Activated CD8-positive, alpha-beta memory T cell treated with anti-CD3 and anti-CD28 coated beads, Interleukin-2, amount 10 ng/mL, durations not matched to agents 7 days and 5 days (primary cell): ENCODE measurements at regions of chr13 and their contacts with region 1.

Region 1: GRCh38 chr13:30114571-30115256 is 192.6 kb downstream of the KATNAL1 start:
- DNase-seq: peak; percentile 95
- ATAC-seq: peak; percentile 97
- H3K4me3 Mint-ChIP-seq: peak overlapping the region; percentile 71
- H3K27ac Mint-ChIP-seq: peak overlapping the region; percentile 24
- H3K4me1 Mint-ChIP-seq: peaks cover 33% of the 10 kb centered on the region
- H3K27me3 Mint-ChIP-seq: peaks cover 6% of the 10 kb centered on the region

Region 2: DNA sequence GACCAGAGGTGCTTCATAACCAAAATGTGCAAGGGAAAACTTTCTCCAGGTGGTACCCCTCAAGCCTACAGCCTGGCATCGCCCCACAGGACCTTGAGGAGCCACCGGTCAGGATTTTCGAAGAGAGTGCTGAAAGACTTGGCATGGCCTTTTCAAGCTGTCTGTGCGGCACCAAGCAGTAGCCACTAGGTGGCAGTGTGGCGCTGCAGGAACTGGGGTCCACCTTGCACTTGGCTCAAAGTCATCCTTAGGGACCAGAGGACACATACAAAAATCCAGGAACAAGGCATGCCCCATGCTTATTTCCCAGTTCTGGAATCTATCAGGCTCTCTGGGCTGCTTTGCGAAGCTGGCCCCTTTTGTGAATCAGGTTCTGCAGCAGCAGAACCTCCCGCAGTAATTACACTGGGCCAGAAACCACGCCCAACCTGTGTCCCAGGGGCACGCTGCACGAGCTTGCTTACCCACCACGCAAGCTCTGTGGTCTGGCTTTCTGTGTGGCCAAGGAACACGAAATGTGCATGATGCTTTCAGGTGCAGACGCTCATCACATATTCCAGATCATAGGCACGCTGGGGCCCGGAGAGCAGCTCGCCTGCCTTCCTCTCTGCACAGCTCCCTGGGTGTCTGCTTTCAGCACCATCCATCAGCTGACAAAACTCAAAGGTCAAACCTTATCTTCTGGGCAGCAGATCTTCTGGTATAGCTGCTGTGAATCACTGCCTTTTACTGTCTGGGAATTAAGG is 606.4 kb before region 1 on chr13:
- CTCF ChIA-PET with region 1: interaction called, 54 read pairs
- DNase-seq: peak; percentile 82
- ATAC-seq: peak; percentile 86
- H3K4me3 Mint-ChIP-seq: no peak overlapping the region
- H3K27ac Mint-ChIP-seq: no peak overlapping the region
- H3K4me1 Mint-ChIP-seq: peaks cover 15% of the 10 kb centered on the region
- H3K27me3 Mint-ChIP-seq: peaks cover 9% of the 10 kb centered on the region

Region 3: DNA sequence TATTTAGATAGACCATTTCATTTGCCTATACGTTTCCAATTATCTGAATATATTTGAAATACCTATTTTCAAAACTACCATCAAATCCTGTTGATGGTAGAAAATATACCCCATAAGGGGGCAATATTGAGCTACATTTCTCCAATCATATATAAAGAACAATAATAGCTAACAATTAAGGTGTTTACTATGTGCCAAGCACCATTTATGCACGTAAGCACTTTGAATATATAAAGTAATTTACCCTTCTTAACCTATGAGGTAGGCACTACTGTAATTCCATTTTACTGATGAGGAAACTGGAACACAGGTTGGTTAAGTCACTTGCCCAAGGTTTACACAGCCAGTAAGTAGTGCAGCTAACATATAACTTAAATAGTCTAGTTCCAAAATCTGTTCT is 343.5 kb before region 1 on chr13:
- CTCF ChIA-PET with region 1: interaction called, 224 read pairs
- DNase-seq: no peak
- ATAC-seq: peak; percentile 42
- H3K4me3 Mint-ChIP-seq: no peak overlapping the region
- H3K27ac Mint-ChIP-seq: no peak overlapping the region
- H3K4me1 Mint-ChIP-seq: no peaks in the 10 kb centered on the region
- H3K27me3 Mint-ChIP-seq: no peaks in the 10 kb centered on the region

Region 4: GRCh38 chr13:29850224-29850898 is 264.4 kb before region 1 on chr13 and contains the start of gene UBL3:
- CTCF ChIA-PET with region 1: interaction called, 103 read pairs
- DNase-seq: peak; percentile 98
- ATAC-seq: peak; percentile 91
- H3K4me3 Mint-ChIP-seq: peak within 1 kb of the TSS; percentile 89
- H3K27ac Mint-ChIP-seq: peak within 1 kb of the TSS; percentile 99
- H3K4me1 Mint-ChIP-seq: peaks cover 34% of the 10 kb centered on the region
- H3K27me3 Mint-ChIP-seq: no peaks in the 10 kb centered on the region
- total RNA-seq, gene UBL3: 9.6 to 10.2 TPM

Region 5: GRCh38 chr13:29892151-29892550 is 222.6 kb before region 1 on chr13:
- CTCF ChIA-PET with region 1: no interaction called
- DNase-seq: no peak
- ATAC-seq: no peak
- H3K4me3 Mint-ChIP-seq: no peak overlapping the region
- H3K27ac Mint-ChIP-seq: no peak overlapping the region
- H3K4me1 Mint-ChIP-seq: peaks cover 9% of the 10 kb centered on the region
- H3K27me3 Mint-ChIP-seq: no peaks in the 10 kb centered on the region

Region 6: GRCh38 chr13:30045916-30046704 is 68.6 kb before region 1 on chr13:
- CTCF ChIA-PET with region 1: interaction called, 25 read pairs
- DNase-seq: no peak
- ATAC-seq: no peak
- H3K4me3 Mint-ChIP-seq: no peak overlapping the region
- H3K27ac Mint-ChIP-seq: no peak overlapping the region
- H3K4me1 Mint-ChIP-seq: peaks cover 62% of the 10 kb centered on the region
- H3K27me3 Mint-ChIP-seq: no peaks in the 10 kb centered on the region

Region 7: DNA sequence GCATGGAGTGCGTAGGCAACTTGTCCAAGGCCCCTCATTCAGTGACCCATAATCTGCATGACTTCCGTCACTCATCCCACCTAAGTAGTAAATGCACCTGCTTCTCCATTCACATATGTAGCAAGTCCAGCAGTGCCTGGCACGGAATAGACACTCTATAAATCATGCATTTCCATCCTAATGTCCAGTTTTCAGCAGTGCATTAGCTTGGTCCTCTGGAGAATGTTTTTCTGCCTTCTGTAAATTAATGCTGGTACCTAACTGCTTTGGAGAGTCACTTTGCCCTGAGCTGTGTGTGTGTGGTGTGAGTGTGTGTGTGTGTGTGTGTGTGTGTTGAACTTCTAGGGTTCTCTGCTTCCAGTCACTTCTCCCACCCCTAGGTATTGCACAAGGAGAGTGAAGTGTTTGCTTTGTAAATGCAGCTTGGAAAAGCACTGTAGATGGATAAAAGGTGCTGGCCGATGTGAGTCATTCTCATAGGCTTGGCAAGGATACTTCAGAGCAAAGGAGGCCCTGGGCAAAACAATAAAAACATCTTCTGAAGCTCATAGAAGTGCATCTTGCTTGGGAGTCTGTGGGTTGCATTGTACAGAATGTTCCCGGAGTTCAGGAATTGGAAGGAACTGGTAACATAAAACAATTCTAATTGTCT is 10.8 kb after region 1 on chr13:
- CTCF ChIA-PET with region 1: interaction called, 60 read pairs
- DNase-seq: no peak
- ATAC-seq: no peak
- H3K4me3 Mint-ChIP-seq: no peak overlapping the region
- H3K27ac Mint-ChIP-seq: no peak overlapping the region
- H3K4me1 Mint-ChIP-seq: peaks cover 22% of the 10 kb centered on the region
- H3K27me3 Mint-ChIP-seq: no peaks in the 10 kb centered on the region

Region 8: DNA sequence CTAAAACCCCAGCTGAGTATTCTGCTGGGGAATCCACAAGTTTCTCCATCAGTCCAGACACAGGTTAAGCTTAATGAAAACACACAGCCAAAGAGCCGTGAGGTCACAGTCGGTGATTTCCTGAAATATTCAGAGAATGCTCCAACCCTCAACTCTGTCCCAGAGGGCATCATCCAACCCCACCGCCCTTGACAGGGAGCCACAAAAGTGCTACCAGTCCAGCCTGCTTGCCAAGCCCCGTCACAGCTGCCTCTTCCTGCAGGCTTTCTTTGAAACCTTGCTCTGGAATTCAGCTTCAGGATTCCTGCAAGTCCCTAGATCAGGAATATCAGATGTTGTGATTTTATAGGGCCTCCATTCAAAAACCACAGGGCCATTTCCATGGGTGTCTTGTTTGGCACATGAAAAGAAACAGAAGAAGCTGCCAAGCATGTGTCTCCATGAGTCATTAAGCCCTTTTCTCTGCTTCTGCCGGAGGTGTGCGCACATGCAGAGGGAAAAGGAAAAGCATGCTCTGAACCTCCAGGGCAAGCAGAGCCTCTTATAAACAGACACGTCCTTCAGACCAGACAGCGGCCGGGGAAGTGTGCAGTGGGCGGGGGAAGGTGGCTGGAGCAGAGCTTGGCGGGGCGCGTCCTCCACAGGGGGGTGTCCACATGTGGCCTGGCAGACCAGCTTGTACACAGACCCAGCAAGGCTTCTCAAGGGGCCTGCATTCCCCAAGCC is 27.9 kb after region 1 on chr13:
- CTCF ChIA-PET with region 1: interaction called, 14 read pairs
- DNase-seq: no peak
- ATAC-seq: no peak
- H3K4me3 Mint-ChIP-seq: no peak overlapping the region
- H3K27ac Mint-ChIP-seq: peak overlapping the region; percentile 44
- H3K4me1 Mint-ChIP-seq: peaks cover 54% of the 10 kb centered on the region
- H3K27me3 Mint-ChIP-seq: no peaks in the 10 kb centered on the region

Region 9: DNA sequence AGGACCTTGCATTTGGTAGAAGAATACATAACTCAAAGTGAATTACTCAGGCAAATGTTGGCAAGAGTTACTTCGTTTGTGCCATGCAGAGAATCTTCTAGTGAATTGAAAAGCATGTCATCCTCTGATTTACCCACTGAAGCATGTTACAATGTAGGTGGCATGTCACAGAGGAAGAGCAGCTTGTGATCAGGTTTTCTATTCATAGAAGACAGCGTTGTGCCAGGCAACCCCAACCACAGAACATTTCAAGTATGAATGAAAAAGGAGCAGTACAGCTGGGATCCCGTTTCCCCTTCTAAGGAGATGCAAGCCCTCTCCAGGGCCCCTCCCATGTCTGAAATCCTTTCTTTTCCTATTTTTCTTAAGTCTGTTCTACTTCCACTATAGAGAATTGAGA is 198.6 kb after region 1 on chr13:
- CTCF ChIA-PET with region 1: no interaction called
- DNase-seq: no peak
- ATAC-seq: no peak
- H3K4me3 Mint-ChIP-seq: no peak overlapping the region
- H3K27ac Mint-ChIP-seq: no peak overlapping the region
- H3K4me1 Mint-ChIP-seq: peaks cover 16% of the 10 kb centered on the region
- H3K27me3 Mint-ChIP-seq: no peaks in the 10 kb centered on the region

Region 10: GRCh38 chr13:30334663-30335386 is 220.1 kb after region 1 on chr13:
- CTCF ChIA-PET with region 1: no interaction called
- DNase-seq: no peak
- ATAC-seq: peak; percentile 63
- H3K4me3 Mint-ChIP-seq: no peak overlapping the region
- H3K27ac Mint-ChIP-seq: no peak overlapping the region
- H3K4me1 Mint-ChIP-seq: peaks cover 4% of the 10 kb centered on the region
- H3K27me3 Mint-ChIP-seq: no peaks in the 10 kb centered on the region

Region 11: GRCh38 chr13:30415430-30416030 is 300.8 kb after region 1 on chr13:
- CTCF ChIA-PET with region 1: no interaction called
- DNase-seq: no peak
- ATAC-seq: no peak
- H3K4me3 Mint-ChIP-seq: no peak overlapping the region
- H3K27ac Mint-ChIP-seq: no peak overlapping the region
- H3K4me1 Mint-ChIP-seq: peaks cover 13% of the 10 kb centered on the region
- H3K27me3 Mint-ChIP-seq: no peaks in the 10 kb centered on the region